ENCODE measurements at regions of chr3 and their contacts with region 1.

Region 1: DNA sequence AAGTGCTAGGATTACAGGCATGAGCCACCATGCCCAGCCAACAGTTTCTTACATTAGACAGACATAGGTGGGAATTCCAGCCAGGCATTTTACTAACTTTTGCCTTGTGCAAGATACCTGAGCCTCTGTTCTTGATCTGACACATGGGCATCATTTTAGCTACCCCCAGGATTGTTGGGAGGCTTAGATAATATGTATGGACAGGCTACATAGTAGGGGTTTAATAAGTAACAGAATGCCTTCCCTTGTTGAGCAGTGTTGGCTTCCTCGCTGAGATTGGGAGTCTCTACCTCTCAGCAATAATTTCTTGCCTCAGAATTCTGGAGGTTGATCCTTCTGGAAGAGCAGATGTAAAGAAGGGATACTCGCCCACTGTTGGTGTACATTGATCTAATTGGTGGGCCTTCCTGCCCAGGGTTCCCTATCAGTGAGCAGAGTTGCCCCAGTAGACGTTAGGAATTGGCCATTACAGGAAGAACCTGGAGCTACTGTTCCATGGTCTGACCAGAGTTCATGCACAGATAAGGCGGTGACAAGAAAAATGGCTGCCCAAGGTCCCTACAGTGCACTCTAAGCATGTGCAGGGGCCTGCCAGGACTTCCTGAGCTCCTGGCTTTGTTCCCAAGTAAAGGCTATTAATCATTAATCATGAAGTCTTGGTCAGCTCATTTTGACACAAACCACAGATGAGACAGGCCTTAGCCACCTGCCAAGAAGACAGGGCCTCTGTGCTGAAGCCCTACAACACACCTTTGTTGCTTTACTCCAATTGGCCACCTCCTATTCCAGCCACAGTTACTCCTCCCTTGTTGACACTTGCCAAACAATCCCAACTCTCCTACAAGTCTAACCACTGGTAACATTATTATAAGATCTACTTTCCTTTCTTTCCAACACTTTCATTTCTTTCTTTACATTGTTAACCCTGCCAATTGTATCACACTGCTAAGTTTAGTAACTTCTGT is 5.0 kb upstream of the IL17RE start:
- DNase-seq: peak; percentile 74 to 96
- H3K4me3 ChIP-seq: peak overlapping the region; percentile 20; the same call in 1 of the 2 replicates
- H3K27ac ChIP-seq: peak overlapping the region; percentile 73
- H3K4me1 ChIP-seq: peaks cover 74% of the 10 kb centered on the region
- H3K27me3 ChIP-seq: no peaks in the 10 kb centered on the region
- CTCF ChIP-seq: no peak

Region 2: GRCh38 chr3:9659849-9660248 is 237.8 kb before region 1 on chr3:
- CTCF ChIA-PET with region 1: no interaction called
- POLR2A ChIA-PET with region 1: interaction called, 24 read pairs
- intact Hi-C with region 1: no loop called
- DNase-seq: no peak
- H3K4me3 ChIP-seq: no peak overlapping the region
- H3K27ac ChIP-seq: no peak overlapping the region
- H3K4me1 ChIP-seq: no peaks in the 10 kb centered on the region
- H3K27me3 ChIP-seq: no peaks in the 10 kb centered on the region
- CTCF ChIP-seq: no peak

Region 3: DNA sequence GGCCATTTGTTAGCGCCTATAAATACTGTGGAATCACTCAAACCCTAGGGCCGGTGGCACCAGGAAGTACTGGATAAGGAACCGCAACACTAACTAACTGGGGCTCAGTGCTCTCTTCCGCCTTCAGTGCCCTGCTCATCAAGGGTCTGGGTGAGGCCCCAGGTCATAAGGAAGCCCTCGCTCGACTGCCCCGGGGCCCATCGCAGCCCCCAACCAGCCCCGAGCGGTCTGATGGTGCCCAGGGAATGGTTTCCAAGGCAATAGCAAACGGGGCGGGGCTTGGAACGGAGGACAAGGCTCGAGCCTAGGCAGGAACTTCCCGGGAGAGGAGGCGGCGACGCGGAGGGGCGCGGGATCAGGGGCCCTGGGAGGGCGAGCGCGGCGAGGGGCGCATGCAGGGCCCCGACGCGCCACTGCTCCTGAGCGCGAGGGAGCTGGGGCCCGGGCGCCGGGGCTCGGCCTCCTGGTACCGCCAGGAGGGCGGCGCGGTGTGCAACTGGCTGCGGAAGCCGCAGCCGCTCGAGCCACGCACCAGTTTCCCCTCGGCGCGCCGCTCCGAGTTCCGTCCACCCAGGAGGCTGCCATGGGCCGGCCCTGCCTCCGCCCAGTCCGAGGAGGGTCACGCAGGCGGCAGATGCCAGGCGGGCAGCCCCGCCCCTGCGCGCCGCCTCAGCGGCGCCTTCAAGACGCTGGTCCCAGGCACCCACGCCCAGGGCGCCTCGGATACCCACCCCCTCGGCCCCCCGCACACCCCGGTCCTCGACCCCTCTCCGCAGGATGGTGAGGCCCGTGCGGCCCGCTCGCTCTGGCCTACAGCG is 87.9 kb before region 1 on chr3 and contains the start of gene TTLL3:
- CTCF ChIA-PET with region 1: no interaction called
- POLR2A ChIA-PET with region 1: no interaction called
- intact Hi-C with region 1: no loop called
- DNase-seq: peak in 1 of 2 experiments; percentile 62
- H3K4me3 ChIP-seq: peak within 1 kb of the TSS; percentile 66
- H3K27ac ChIP-seq: peak within 1 kb of the TSS; percentile 62
- H3K4me1 ChIP-seq: peaks cover 19% of the 10 kb centered on the region
- H3K27me3 ChIP-seq: no peaks in the 10 kb centered on the region
- CTCF ChIP-seq: no peak
- total RNA-seq, gene TTLL3: 21.7 and 35.8 TPM in 2 replicates

Region 4: GRCh38 chr3:9843715-9844438 is 53.8 kb before region 1 on chr3 and contains the start of gene RPUSD3:
- CTCF ChIA-PET with region 1: no interaction called
- POLR2A ChIA-PET with region 1: no interaction called
- intact Hi-C with region 1: loop called (anchors 5 kb)
- DNase-seq: peak; percentile 79 to 97
- H3K4me3 ChIP-seq: peak within 1 kb of the TSS; percentile 66
- H3K27ac ChIP-seq: peak within 1 kb of the TSS; percentile 16; the same call in 1 of the 2 replicates
- H3K4me1 ChIP-seq: peaks cover 20% of the 10 kb centered on the region
- H3K27me3 ChIP-seq: no peaks in the 10 kb centered on the region
- CTCF ChIP-seq: no peak
- total RNA-seq, gene RPUSD3: 53.2 and 57.7 TPM in 2 replicates

Region 5: DNA sequence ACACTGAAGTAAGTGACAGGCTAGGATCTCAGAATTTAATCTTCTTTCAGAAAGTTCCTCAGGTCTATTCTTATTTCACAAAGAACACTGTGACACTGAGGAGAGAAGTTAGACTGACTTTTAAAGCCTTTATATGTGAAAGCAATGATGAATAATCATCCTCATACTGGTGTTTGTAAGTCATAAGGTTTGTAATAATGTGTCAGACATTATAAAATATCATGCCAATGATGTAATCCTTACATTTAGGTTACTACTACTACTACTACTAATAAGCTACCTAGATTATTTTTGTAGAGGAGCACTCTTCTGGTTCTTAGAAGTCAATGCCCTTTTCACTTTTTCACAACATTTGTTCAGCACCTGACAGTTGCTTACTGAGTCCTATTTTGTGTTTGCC is 177.0 kb after region 1 on chr3:
- CTCF ChIA-PET with region 1: no interaction called
- POLR2A ChIA-PET with region 1: no interaction called
- intact Hi-C with region 1: no loop called
- DNase-seq: no peak
- H3K4me3 ChIP-seq: no peak overlapping the region
- H3K27ac ChIP-seq: no peak overlapping the region
- H3K4me1 ChIP-seq: no peaks in the 10 kb centered on the region
- H3K27me3 ChIP-seq: no peaks in the 10 kb centered on the region
- CTCF ChIP-seq: no peak